Thyroid gland (tissue), 4 donors: ENCODE measurements at regions of chr1 and their contacts with region 1.

Region 1: GRCh38 chr1:54488779-54489626 is 59.0 kb upstream of the ACOT11 start:
- DNase-seq: peak; percentile 81
- H3K4me3 ChIP-seq: peak overlapping the region; percentile 37 to 83 (median 47)
- H3K27ac ChIP-seq: peak overlapping the region; percentile 78 to 97 (median 95)
- H3K4me1 ChIP-seq: peaks cover 7 to 18% of the 10 kb centered on the region in 2 donors
- H3K27me3 ChIP-seq: no peaks in the 10 kb centered on the region
- CTCF ChIP-seq: peak; percentile 81 to 97 (median 96)
- POLR2A ChIP-seq: peak in 1 of 2 donors; percentile 41

Region 2: GRCh38 chr1:54121482-54122134 is 367.4 kb before region 1 on chr1:
- intact Hi-C with region 1: loop called (anchors 2 kb)
- DNase-seq: peak; percentile 81 to 85
- H3K4me3 ChIP-seq: peak overlapping the region in 1 of 3 donors; percentile 1
- H3K27ac ChIP-seq: no peak overlapping the region
- H3K4me1 ChIP-seq: peaks cover 0 to 18% of the 10 kb centered on the region in 2 donors
- H3K27me3 ChIP-seq: no peaks in the 10 kb centered on the region
- CTCF ChIP-seq: peak; percentile 64 to 82 (median 72)
- POLR2A ChIP-seq: no peak

Region 3: GRCh38 chr1:54273092-54273794 is 215.8 kb before region 1 on chr1:
- intact Hi-C with region 1: loop called (anchors 5 kb)
- DNase-seq: peak; percentile 85 to 86
- H3K4me3 ChIP-seq: no peak overlapping the region
- H3K27ac ChIP-seq: peak overlapping the region; percentile 71 to 94 (median 86)
- H3K4me1 ChIP-seq: peaks cover 47 to 75% of the 10 kb centered on the region in 2 donors
- H3K27me3 ChIP-seq: no peaks in the 10 kb centered on the region
- CTCF ChIP-seq: peak in 5 of 6 experiments; percentile 24 to 77 (median 63)
- POLR2A ChIP-seq: peak in 1 of 2 donors; percentile 32

Region 4: DNA sequence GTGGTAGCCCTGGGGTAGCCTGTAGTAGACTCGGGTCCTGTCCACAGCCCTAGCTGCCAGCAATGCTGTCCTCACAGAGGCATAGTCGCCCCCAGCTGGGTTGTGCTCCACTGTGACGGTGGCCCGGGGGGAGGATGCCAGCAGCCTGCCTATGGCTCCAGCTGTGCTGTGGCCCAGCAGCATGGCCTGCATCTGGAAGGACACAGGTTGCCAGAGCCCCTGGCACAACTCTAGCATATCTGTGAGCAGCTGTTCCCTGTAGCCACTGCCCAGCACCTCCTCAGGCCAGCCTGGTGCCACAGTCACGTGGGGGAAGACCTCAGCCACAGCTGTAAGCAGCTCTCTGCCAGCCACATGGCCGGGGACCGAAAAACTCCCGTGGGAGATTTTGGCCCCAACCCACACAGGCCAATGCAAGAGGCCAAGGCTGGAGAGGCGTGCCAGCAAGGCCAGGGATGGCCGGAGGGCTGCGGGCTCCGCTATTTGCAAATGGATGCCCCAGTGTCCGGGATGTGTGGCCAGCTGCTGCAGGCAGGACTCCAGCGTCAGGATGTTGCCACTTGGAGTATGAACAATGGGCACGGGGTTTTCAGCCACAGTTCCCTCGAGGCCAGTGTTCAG is 120.4 kb after region 1 on chr1:
- intact Hi-C with region 1: no loop called
- DNase-seq: no peak
- H3K4me3 ChIP-seq: no peak overlapping the region
- H3K27ac ChIP-seq: no peak overlapping the region
- H3K4me1 ChIP-seq: no peaks in the 10 kb centered on the region
- H3K27me3 ChIP-seq: no peaks in the 10 kb centered on the region
- CTCF ChIP-seq: no peak
- POLR2A ChIP-seq: no peak

Region 5: DNA sequence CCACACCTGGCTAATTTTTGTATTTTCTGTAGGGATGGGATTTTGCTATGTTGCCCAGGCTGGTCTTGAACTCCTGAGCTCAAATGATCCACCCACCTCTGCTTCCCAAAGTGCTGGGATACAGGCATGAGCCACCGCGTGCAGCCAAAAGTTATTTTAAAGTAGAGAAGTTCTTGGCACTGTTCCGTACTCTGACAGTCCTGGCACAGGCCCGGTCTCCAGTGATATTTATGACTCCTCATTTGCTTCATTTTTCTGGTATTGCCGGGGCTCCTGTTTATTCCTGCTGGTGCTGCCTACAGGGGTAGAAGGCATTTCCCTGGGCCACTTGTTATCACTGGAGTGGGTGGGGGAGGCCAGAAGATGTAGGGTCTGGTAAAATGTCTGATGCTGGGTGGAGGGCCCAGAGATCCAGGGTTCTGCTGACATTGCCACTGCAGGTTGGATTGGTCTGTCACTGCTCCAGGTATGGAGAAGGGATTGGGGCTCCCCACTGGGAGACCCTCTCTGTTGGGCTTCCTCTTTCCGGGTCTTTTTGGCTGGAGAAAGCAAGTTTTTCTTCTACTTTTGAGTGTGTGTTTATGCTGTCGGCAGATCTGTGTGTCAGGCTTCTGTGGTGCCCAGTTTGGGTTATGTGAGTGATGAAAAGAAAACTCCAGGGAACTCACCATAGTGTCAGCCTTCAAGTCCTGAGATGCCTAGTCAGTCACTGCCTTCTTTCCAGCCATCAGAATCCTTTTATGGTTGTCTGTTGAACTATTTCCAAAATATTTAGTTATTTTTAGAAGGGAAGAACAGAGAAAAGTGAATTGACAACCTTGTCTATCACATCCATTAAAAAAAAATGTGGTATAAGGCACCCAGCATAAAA is 157.0 kb after region 1 on chr1:
- intact Hi-C with region 1: no loop called
- DNase-seq: no peak
- H3K4me3 ChIP-seq: no peak overlapping the region
- H3K27ac ChIP-seq: no peak overlapping the region
- H3K4me1 ChIP-seq: no peaks in the 10 kb centered on the region
- H3K27me3 ChIP-seq: no peaks in the 10 kb centered on the region
- CTCF ChIP-seq: no peak
- POLR2A ChIP-seq: no peak